ENCODE measurements at regions of chr7 and their contacts with region 1.

Region 1: DNA sequence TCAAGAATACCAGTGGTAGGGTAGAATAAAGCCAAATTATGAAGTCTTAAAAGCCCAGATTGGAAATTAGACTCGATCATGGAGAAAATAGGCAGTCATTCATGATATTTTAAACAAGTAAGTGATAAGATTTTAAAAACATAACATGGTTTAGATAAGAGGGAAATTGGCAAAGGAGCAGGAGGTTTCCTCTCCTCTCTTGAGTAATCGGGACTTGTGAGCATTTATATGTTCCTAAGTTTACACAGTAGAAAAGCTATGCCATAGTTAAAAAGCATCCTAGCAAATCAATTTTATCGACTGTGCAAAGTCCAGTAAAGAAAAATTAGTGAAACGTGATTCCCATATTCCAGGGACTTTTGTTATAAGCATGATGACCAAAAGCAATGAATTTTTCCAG is 313.2 kb downstream of the AHR start:
- DNase-seq: no peak
- H3K4me3 ChIP-seq: no peak overlapping the region
- H3K27ac ChIP-seq: no peak overlapping the region
- H3K4me1 ChIP-seq: peaks cover 0 to 3% (median 0%) of the 10 kb centered on the region in 4 donors
- H3K27me3 ChIP-seq: no peaks in the 10 kb centered on the region
- CTCF ChIP-seq: no peak
- EP300 ChIP-seq: no peak
- POLR2A ChIP-seq: no peak

Region 2: DNA sequence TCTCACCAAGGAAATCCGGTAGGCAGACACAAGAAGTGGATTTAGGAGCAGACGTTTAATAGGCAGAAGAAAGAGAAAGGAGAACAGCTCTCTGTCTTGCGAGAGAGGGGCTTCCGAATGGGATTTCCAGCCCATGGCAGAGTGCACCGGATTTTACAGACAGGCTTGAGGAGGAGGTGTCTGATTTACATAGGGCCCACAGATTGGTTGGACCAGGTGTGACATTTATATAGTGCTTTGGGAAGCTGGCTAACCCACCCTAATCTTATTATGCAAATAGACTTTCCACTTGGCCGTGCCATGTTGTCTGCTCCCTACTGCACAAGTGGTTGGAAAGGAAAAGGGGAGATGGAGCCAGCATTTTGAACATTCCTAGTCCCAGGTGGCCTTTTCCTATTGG is 1023.8 kb before region 1 on chr7:
- in situ Hi-C with region 1: no loop called
- intact Hi-C with region 1: no loop called
- DNase-seq: no peak
- H3K4me3 ChIP-seq: no peak overlapping the region
- H3K27ac ChIP-seq: no peak overlapping the region
- H3K4me1 ChIP-seq: peaks cover 0 to 4% (median 0%) of the 10 kb centered on the region in 4 donors
- H3K27me3 ChIP-seq: no peaks in the 10 kb centered on the region
- CTCF ChIP-seq: no peak
- EP300 ChIP-seq: no peak
- POLR2A ChIP-seq: no peak

Region 3: DNA sequence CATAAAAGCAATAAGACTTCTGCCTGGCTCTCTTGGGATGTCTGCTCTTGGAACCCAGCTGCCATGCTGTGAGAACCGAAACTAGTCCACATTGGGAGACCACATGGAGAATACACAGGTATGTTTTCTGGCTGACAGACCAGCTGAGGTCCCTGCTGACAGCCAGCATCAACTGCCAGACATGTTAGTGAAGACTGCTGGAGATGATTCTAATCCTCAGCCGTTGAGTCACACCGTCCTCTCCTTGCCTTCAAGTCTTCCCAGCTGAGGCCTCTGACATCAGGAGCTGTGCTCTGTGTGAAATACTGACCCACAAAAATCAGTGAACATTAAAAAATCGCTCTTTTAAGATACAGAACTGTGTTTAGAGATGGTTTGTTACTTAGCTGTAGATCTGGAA is 769.9 kb before region 1 on chr7:
- in situ Hi-C with region 1: no loop called
- intact Hi-C with region 1: no loop called
- DNase-seq: no peak
- H3K4me3 ChIP-seq: no peak overlapping the region
- H3K27ac ChIP-seq: no peak overlapping the region
- H3K4me1 ChIP-seq: peaks cover 0 to 7% (median 3%) of the 10 kb centered on the region in 4 donors
- H3K27me3 ChIP-seq: no peaks in the 10 kb centered on the region
- CTCF ChIP-seq: no peak
- EP300 ChIP-seq: no peak
- POLR2A ChIP-seq: no peak

Region 4: DNA sequence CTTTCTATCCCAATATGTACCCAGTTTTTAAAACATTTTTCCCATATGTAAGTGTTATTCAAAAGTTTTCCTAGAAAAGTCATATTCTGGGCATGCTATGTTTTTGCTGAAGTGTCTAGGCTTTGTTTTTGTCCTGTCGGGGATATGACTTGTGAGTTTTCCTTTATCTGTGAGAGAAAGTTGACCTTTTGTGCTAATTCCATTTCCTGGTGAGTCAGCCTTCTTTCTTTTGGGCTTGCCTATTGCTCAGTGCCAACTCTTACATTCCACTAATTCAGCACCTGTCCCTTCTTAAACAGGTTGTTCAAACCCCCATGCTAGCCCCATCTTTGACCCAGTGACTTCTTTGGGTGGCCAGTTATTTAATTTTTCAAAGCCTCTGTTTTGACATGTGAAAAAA is 166.9 kb before region 1 on chr7:
- in situ Hi-C with region 1: no loop called
- intact Hi-C with region 1: no loop called
- DNase-seq: no peak
- H3K4me3 ChIP-seq: no peak overlapping the region
- H3K27ac ChIP-seq: peak overlapping the region in 1 of 4 donors; percentile 17
- H3K4me1 ChIP-seq: peaks cover 0 to 25% (median 14%) of the 10 kb centered on the region in 4 donors
- H3K27me3 ChIP-seq: no peaks in the 10 kb centered on the region
- CTCF ChIP-seq: no peak
- EP300 ChIP-seq: no peak
- POLR2A ChIP-seq: no peak

Region 5: GRCh38 chr7:17593819-17594419 is 17.7 kb before region 1 on chr7:
- in situ Hi-C with region 1: no loop called
- intact Hi-C with region 1: loop called (anchors 1 kb)
- DNase-seq: no peak
- H3K4me3 ChIP-seq: no peak overlapping the region
- H3K27ac ChIP-seq: no peak overlapping the region
- H3K4me1 ChIP-seq: no peaks in the 10 kb centered on the region
- H3K27me3 ChIP-seq: no peaks in the 10 kb centered on the region
- CTCF ChIP-seq: no peak
- EP300 ChIP-seq: no peak
- POLR2A ChIP-seq: no peak